GM12878 (cell line): ENCODE measurements at regions of chr1 and their contacts with region 1.

Region 1: DNA sequence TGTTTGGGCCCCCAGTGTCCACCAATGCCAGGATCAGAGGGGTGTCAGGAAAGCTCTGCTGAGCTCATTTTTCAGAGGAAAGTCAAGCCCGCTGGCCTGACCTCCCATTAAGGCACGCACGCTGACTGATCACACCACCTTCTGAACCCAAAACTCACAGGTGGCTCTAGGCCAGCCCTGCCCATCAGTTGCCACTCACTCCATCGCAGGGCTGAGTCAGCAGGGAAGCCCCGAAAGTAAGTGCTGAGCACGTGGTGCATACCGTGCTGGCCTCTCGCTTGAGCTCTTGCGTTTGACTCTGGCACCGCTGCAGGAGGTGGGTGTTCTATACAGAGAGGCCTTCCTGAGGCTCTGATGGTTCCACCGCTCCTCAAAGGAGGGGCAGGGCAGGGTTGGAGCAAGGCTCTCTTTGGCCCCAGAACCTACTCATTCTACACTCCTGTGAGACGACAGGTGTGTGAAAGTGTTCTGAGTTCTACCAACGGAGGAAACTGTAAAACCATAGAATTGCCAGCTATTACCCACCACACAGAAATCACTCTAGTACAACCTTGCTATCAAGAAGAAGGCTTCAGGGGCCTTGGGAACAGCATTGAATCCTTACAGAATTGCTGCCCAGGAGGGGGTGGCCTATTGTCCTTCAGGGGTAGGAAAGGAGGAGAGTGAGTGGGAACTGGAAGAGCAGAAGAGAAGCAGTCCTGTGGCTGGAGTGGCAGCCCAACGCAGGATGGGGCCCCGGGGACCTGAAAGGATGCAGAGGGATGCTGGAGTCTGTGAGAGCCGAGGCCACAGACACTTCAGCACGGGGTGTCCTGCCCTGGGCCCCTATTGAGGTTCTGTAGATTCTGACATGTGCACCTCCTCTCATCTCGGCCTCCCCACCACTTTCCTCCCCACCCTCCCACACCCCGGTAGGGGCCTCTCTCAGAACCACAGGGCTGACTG is 214.7 kb upstream of the EDN2 start:
- DNase-seq: peak; percentile 86
- ATAC-seq: peak; percentile 96
- H3K4me3 ChIP-seq: no peak overlapping the region
- H3K27ac ChIP-seq: peak overlapping the region; percentile 9; the same call in 1 of the 2 replicates
- H3K4me1 ChIP-seq: peaks cover 35% of the 10 kb centered on the region
- H3K27me3 ChIP-seq: no peaks in the 10 kb centered on the region
- CTCF ChIP-seq: no peak
- EP300 ChIP-seq: peak in 1 of 2 experiments; percentile 47; a peak in 1 of 4 replicates
- POLR2A ChIP-seq: no peak; the same call in 1 of the 2 replicates
- RAD21 ChIP-seq: peak; percentile 37

Region 2: DNA sequence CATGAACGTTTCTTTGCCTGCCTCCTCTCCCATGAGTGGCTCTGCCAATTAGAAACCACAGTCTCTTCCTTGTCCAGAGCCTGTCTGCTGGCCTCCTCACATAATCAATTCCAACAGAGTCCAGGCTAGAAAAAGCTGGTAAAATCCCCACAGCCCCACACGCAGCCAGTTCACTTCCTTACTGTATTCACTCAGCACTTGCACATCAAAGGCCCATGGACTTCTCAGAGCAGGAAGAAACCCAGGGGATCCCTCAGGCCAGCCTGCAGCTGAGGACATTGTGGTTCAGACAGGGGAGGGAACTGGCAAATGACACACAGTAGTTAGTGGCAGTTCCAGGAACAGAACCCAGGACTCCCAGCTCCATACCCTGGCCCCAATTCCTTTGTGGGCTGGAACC is 43.1 kb before region 1 on chr1:
- CTCF ChIA-PET with region 1: interaction called, 11 read pairs
- POLR2A ChIA-PET with region 1: interaction called, 5 read pairs
- RAD21 ChIA-PET with region 1: interaction called, 81 read pairs
- SMC1A ChIA-PET with region 1: interaction called, 27 read pairs
- in situ Hi-C with region 1: no loop called
- intact Hi-C with region 1: no loop called
- DNase-seq: no peak
- ATAC-seq: peak; percentile 42
- H3K4me3 ChIP-seq: no peak overlapping the region
- H3K27ac ChIP-seq: no peak overlapping the region
- H3K4me1 ChIP-seq: peaks cover 16% of the 10 kb centered on the region
- H3K27me3 ChIP-seq: no peaks in the 10 kb centered on the region
- CTCF ChIP-seq: no peak
- EP300 ChIP-seq: no peak
- POLR2A ChIP-seq: no peak
- RAD21 ChIP-seq: no peak

Region 3: GRCh38 chr1:41678111-41678878 is 20.9 kb before region 1 on chr1:
- CTCF ChIA-PET with region 1: interaction called, 12 read pairs
- POLR2A ChIA-PET with region 1: interaction called, 21 read pairs
- RAD21 ChIA-PET with region 1: interaction called, 31 read pairs
- SMC1A ChIA-PET with region 1: interaction called, 34 read pairs
- in situ Hi-C with region 1: no loop called
- intact Hi-C with region 1: no loop called
- DNase-seq: no peak
- ATAC-seq: peak; percentile 82
- H3K4me3 ChIP-seq: no peak overlapping the region
- H3K27ac ChIP-seq: peak overlapping the region; percentile 40; the same call in 1 of the 2 replicates
- H3K4me1 ChIP-seq: peaks cover 43% of the 10 kb centered on the region
- H3K27me3 ChIP-seq: no peaks in the 10 kb centered on the region
- CTCF ChIP-seq: no peak
- EP300 ChIP-seq: no peak
- POLR2A ChIP-seq: 0 out of 2 replicates have a peak, but pooled peaks have one; percentile 24
- RAD21 ChIP-seq: no peak

Region 4: GRCh38 chr1:41683681-41684500 is 15.3 kb before region 1 on chr1:
- CTCF ChIA-PET with region 1: interaction called, 11 read pairs
- POLR2A ChIA-PET with region 1: interaction called, 17 read pairs
- RAD21 ChIA-PET with region 1: interaction called, 14 read pairs
- SMC1A ChIA-PET with region 1: interaction called, 34 read pairs
- in situ Hi-C with region 1: no loop called
- intact Hi-C with region 1: no loop called
- DNase-seq: no peak
- ATAC-seq: no peak; the same call in 1 of the 3 replicates
- H3K4me3 ChIP-seq: no peak overlapping the region
- H3K27ac ChIP-seq: peak overlapping the region; percentile 51
- H3K4me1 ChIP-seq: peaks cover 50% of the 10 kb centered on the region
- H3K27me3 ChIP-seq: no peaks in the 10 kb centered on the region
- CTCF ChIP-seq: no peak
- EP300 ChIP-seq: no peak
- POLR2A ChIP-seq: no peak
- RAD21 ChIP-seq: no peak

Region 5: GRCh38 chr1:41709331-41709730 is 10.1 kb after region 1 on chr1:
- CTCF ChIA-PET with region 1: interaction called, 3 read pairs
- POLR2A ChIA-PET with region 1: interaction called, 5 read pairs
- RAD21 ChIA-PET with region 1: interaction called, 3 read pairs
- SMC1A ChIA-PET with region 1: interaction called, 10 read pairs
- in situ Hi-C with region 1: no loop called
- intact Hi-C with region 1: no loop called
- DNase-seq: no peak
- ATAC-seq: no peak
- H3K4me3 ChIP-seq: no peak overlapping the region
- H3K27ac ChIP-seq: no peak overlapping the region
- H3K4me1 ChIP-seq: peaks cover 5% of the 10 kb centered on the region
- H3K27me3 ChIP-seq: no peaks in the 10 kb centered on the region
- CTCF ChIP-seq: no peak
- EP300 ChIP-seq: no peak
- POLR2A ChIP-seq: no peak
- RAD21 ChIP-seq: no peak

Region 6: GRCh38 chr1:41720861-41721410 is 21.7 kb after region 1 on chr1:
- CTCF ChIA-PET with region 1: interaction called, 6 read pairs
- POLR2A ChIA-PET with region 1: interaction called, 10 read pairs
- RAD21 ChIA-PET with region 1: interaction called, 10 read pairs
- SMC1A ChIA-PET with region 1: interaction called, 31 read pairs
- in situ Hi-C with region 1: no loop called
- intact Hi-C with region 1: loop called (anchors 2 kb)
- DNase-seq: no peak
- ATAC-seq: peak; percentile 80
- H3K4me3 ChIP-seq: no peak overlapping the region
- H3K27ac ChIP-seq: peak overlapping the region; percentile 21; the same call in 1 of the 2 replicates
- H3K4me1 ChIP-seq: peaks cover 69% of the 10 kb centered on the region
- H3K27me3 ChIP-seq: no peaks in the 10 kb centered on the region
- CTCF ChIP-seq: no peak
- EP300 ChIP-seq: no peak
- POLR2A ChIP-seq: no peak
- RAD21 ChIP-seq: no peak

Region 7: DNA sequence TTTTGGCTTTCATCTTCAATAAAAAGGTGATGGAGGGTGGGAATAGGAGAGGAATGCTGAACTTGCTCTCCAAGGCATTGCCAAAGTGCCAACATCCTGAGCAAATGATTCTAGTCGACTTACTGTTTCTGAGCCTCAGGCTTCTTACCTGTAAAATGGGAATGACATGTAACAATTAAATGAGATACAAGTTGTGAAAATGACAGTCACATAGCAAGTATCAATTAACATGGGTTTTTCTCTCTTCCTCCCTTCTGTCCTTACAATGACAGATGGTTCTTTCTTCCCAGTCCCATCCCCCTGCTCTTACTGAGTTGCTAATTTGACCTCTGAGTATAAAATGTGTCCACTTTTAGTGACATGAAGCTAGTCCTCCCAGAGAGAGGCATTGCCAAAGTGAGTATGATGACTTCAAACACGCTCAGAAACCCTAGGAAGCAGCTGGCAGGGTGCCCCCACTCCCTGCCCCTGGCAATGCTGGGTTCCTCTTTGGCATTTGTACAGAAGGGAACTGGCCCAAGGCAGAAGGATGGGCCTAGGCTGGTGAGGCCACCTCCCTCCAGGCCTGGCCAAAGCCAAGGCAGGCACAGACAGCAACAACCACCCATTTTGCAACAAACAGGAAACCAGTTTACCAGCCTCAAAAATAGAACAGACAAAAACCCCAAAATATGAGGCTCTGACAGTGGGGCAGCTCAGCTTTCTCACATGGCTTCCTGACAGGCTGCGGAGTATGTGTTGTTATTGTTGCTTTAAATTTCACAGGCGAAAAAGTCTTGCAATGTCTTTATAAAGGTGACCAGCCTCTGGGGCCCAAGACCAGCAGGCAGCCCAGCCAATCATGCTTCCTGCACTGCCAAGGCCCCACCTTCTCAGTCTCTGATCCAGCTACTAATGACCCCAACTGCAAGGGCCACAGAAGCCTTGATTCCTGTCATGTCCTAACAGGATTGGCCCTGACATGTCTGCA is 103.6 kb after region 1 on chr1:
- CTCF ChIA-PET with region 1: interaction called, 3 read pairs
- POLR2A ChIA-PET with region 1: interaction called, 3 read pairs
- RAD21 ChIA-PET with region 1: interaction called, 6 read pairs
- SMC1A ChIA-PET with region 1: interaction called, 11 read pairs
- in situ Hi-C with region 1: no loop called
- intact Hi-C with region 1: no loop called
- DNase-seq: peak; percentile 85
- ATAC-seq: peak; percentile 50
- H3K4me3 ChIP-seq: no peak overlapping the region
- H3K27ac ChIP-seq: peak overlapping the region; percentile 74
- H3K4me1 ChIP-seq: peaks cover 86% of the 10 kb centered on the region
- H3K27me3 ChIP-seq: no peaks in the 10 kb centered on the region
- CTCF ChIP-seq: no peak
- EP300 ChIP-seq: peak in 1 of 2 experiments; percentile 44; a peak in 2 of 4 replicates
- POLR2A ChIP-seq: no peak
- RAD21 ChIP-seq: no peak